ENCODE measurements at regions of chr9 and their contacts with region 1.

Region 1: DNA sequence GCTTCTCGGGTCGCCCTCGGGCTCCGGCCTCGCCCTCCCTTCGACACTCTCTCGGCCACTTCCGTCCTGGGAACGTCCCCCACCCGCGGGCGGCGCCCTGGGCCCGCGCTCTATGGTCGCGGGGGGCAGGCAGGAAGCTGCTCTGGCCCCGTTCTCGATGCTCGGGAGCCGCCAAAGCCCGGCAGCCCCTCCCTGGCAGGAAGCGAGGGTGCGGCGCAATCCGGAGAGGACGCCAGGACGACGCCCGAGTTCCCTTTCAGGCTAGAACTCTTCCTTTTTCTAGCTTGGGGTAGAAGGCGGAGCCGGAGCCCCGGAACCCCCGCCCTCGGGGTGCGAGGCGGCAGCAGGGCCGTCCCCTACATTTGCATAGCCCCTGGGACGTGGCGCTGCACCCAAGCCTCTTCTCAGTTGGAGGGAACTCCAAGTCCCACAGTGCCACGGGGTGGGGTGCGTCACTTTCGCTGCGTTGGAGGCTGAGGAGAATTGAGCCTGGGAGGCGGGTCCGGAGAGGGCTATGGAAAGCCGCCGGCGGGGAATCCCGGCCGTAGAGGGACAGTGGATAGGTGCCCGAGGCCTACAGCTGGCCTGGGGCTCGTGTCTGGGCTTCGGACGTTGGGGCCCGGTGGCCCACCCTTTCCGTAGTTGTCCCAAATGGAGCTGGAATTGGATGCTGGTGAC is at the starts of genes CREB3 and TLN1:
- DNase-seq: peak; percentile 97
- H3K4me3 Mint-ChIP-seq: no peak within 1 kb of the TSS
- H3K27ac Mint-ChIP-seq: peak within 1 kb of the TSS; percentile 90
- H3K4me1 Mint-ChIP-seq: peaks cover 25% of the 10 kb centered on the region
- H3K27me3 Mint-ChIP-seq: no peaks in the 10 kb centered on the region
- total RNA-seq, gene CREB3: 34.3 and 34.5 TPM in 2 replicates
- total RNA-seq, gene TLN1: 253 and 267 TPM in 2 replicates

Region 2: DNA sequence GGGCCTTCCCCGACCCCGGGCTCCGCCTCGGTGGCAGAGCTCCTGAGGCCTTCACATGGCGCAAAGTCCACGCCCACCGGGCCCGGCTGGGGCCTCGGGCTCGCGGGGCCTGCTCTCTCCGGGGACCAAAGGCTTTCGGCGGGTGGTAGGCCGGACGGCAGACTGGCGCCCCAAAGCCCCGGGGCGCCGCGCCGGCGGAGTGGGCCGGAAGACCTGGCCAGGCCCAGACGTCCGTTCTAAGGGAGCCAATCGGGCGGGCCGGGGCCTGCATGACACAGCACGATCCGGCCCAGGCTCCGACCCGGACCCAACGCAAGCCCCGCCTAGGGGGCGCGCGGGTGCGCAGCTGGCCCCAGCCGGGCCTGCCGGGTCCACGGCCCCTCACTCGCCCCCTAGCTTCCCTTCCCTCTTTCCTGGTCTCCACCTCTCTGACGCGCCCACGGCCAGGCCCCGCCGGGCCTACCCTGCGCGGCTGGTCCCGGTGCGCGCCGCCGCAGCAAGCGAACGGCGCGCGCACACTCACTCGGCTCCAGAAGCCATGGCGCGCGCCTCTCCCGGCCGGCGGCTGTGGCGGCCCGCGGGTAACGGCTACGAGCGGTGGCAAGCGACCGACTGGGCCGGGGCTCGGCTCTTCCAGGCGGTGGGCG is 660.3 kb before region 1 on chr9:
- intact Hi-C with region 1: loop called (anchors 1 kb)
- DNase-seq: peak; percentile 72
- H3K4me3 Mint-ChIP-seq: peak overlapping the region; percentile 91
- H3K27ac Mint-ChIP-seq: peak overlapping the region; percentile 88
- H3K4me1 Mint-ChIP-seq: peaks cover 43% of the 10 kb centered on the region
- H3K27me3 Mint-ChIP-seq: no peaks in the 10 kb centered on the region

Region 3: DNA sequence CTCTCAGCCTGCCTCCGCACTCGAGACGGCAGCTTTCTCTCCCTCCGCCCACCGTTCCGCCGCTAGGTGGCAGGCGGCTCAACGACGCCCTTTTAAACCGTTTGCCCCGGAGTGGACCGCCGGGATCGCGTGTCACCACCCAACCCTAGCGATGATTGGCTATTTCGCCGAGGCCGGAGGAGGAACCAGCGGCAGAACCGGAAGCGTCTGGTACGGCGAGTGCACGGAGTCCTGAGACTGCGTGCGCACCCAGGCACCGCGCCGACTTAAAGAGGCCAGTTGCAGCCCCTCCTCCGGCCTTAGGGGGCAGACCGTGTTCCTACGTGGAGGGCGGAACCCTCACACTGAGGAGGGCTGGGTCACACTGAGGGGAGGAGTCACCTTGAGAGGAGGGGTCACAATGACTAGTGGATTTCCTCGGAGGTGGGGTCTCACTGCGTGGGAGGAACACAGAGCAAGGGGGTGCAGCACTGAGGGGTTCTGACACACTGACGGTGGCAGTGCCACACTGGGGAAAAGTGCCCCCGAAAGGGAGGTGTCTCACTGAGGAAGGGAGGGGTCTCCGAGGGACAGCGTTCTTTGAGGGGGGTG is 128.2 kb before region 1 on chr9:
- intact Hi-C with region 1: loop called (anchors 1 kb)
- DNase-seq: peak; percentile 99
- H3K4me3 Mint-ChIP-seq: peak overlapping the region; percentile 84
- H3K27ac Mint-ChIP-seq: peak overlapping the region; percentile 93
- H3K4me1 Mint-ChIP-seq: peaks cover 32% of the 10 kb centered on the region
- H3K27me3 Mint-ChIP-seq: no peaks in the 10 kb centered on the region

Region 4: DNA sequence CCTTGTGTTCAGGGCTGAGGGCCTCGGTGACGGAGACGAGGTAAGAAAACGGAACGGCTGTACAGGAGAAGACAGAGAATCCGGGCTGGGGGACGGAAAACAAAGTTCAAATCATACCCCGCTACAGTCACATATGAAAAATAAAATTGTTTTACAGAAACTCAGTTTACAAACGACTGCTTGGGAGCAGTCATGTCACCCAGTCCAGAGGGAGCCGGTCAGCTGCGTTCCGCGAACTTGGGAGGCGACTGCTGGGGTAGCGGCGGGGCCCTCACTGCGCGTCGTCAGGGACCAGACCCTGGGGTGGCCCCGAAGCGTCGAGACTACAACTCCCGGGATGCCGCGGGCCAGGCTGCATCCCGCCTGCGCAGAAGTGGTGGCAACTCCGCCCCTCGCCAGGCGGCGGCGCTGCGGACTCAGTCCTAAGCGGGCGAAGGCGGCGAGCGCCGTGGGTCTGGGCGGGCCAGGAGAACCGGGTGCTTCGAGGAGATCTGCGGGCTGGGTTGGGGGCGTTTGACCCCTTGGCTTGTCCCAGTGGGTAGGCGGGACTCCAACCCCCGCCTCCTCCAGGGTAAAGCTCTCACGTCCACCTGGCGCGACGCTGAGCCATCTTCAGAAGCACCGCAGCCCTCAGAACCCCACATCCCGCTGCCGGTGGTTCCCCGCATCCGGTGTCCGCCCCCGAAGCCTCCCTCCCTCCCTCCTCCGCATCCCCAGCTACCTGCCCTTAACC is 85.6 kb before region 1 on chr9:
- intact Hi-C with region 1: loop called (anchors 2 kb)
- DNase-seq: peak; percentile 91
- H3K4me3 Mint-ChIP-seq: peak overlapping the region; percentile 96
- H3K27ac Mint-ChIP-seq: peak overlapping the region; percentile 96
- H3K4me1 Mint-ChIP-seq: peaks cover 45% of the 10 kb centered on the region
- H3K27me3 Mint-ChIP-seq: no peaks in the 10 kb centered on the region

Region 5: GRCh38 chr9:35690431-35691333 is 41.6 kb before region 1 on chr9:
- intact Hi-C with region 1: loop called (anchors 2 kb)
- DNase-seq: no peak
- H3K4me3 Mint-ChIP-seq: peak overlapping the region; percentile 79
- H3K27ac Mint-ChIP-seq: peak overlapping the region; percentile 58
- H3K4me1 Mint-ChIP-seq: peaks cover 12% of the 10 kb centered on the region
- H3K27me3 Mint-ChIP-seq: no peaks in the 10 kb centered on the region

Region 6: GRCh38 chr9:36207016-36207415 is 474.8 kb after region 1 on chr9:
- intact Hi-C with region 1: no loop called
- DNase-seq: no peak
- H3K4me3 Mint-ChIP-seq: no peak overlapping the region
- H3K27ac Mint-ChIP-seq: peak overlapping the region; percentile 51
- H3K4me1 Mint-ChIP-seq: peaks cover 41% of the 10 kb centered on the region
- H3K27me3 Mint-ChIP-seq: no peaks in the 10 kb centered on the region